GM13977 (cell line): ENCODE measurements at regions of chr7 and their contacts with region 1.

Region 1: DNA sequence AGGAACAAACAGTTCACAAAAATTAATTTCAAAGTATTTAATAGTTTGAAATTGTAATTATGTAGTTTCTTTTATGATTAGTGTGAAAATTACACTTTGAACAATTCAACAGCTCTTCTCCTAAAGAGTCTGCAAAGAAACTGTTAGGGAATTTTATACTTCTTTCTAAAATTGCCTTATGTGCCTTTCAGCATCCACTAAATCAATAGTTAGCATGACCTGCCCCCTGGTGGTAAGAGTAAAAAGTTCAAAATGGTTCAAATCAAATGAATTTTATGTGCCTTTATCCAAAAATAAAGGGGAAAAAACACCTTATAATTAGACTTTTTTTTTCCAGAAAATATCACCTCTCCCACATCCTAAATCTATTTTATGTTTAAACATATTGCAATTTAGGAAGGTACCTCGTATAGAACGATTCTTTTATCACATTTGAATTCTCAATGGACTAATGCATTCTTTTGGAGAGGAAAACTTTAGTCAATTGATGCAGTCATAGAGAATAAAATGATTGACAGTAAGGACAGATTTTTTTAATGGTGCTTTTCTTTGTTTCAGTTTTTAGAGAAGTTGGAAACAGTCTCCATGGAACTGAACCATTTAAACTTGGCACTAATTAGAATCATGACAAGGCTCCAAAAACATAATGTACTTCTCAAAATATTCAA is 163.7 kb downstream of the SEMA3D start:
- DNase-seq: no peak
- CTCF ChIP-seq: peak; percentile 62

Region 2: DNA sequence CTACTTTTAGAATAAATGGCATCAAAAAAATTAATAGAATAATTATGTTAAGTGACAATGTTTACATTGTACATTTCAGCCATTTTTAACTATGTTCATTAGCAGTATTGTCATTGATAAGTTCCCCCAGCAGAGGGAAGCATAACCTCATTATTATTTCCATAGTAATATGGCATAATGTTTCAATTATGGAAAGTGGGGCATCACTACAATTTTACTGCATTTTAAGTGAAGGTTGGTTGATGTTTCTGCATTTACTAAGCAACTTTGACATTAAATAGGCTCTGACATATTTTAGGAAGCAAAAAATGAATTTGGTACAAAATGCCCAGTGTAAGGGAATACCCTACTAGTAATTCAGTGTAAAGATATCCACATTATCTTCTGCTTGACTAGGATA is 1046.9 kb before region 1 on chr7:
- in situ Hi-C with region 1: loop called (anchors 10 kb)
- DNase-seq: peak; percentile 29
- CTCF ChIP-seq: peak; percentile 66